Dendritic cell treated with granulocyte-macrophage colony-stimulating factor and Interleukin-4, amounts not matched to agents 40 ng/mL and 50 ng/mL, for 4 days (primary cell): ENCODE measurements at regions of chr13 and their contacts with region 1.

Region 1: DNA sequence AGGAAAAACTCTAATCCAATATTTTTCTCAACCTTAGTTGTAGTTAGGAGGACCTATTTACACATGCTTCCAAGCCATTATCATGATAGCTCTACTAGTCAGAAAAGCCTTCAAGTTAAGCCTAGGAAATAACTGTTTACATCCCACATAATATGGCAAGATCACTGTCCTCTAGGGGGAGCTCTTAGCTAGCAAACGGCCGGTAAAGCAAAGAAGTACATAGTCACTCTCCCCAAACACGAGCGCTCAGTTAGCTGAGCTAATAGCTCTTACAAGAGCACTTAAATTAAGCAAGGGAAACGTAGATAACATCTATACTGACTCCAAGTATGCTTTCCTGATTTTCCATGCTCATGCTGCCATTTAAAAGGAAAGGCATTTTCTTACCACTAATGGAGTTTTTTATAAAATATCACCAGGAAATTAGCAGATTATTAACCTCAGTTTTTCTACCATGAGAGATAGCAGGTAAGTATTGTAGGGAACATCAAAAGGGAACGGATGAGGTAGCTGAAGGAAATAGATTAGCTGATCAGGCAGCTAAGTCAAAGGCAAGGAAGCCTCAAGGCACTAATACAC is 100.6 kb upstream of the PABPC3 start:
- H3K4me3 Mint-ChIP-seq: no peak overlapping the region
- H3K27ac Mint-ChIP-seq: no peak overlapping the region
- H3K4me1 Mint-ChIP-seq: no peaks in the 10 kb centered on the region
- H3K27me3 Mint-ChIP-seq: peaks cover 39% of the 10 kb centered on the region

Region 2: DNA sequence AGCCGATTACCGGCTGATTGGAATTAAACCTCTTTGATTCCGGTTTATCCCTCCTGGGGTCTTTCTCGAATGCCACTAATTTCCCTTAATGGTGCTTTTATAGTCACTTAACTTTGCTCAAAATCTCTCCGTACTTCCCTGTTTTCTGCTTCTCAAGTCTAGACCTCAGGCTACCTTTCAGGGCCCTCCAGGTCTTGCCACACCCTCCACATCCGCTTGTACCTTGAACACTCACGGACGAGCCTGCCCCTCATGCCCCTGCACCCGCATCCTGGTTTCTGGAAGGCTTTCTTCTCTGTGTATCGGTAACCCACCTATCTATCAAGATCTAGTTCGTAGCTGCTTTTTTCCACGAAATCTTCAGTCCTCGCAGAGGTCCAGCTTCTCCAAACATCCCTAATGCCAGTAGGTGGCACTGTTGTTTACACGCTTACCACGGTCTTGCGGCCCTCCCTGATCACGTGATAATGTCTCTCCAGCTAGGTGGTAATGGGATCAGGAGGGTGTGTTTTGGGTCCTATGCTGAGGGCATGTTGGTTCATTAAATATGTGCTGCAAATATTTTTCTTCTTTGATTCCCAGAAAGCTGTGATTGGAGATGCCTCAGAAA is 301.3 kb before region 1 on chr13:
- intact Hi-C with region 1: loop called (anchors 10 kb)
- H3K4me3 Mint-ChIP-seq: no peak overlapping the region
- H3K27ac Mint-ChIP-seq: no peak overlapping the region
- H3K4me1 Mint-ChIP-seq: peaks cover 5% of the 10 kb centered on the region
- H3K27me3 Mint-ChIP-seq: peaks cover 17% of the 10 kb centered on the region

Region 3: DNA sequence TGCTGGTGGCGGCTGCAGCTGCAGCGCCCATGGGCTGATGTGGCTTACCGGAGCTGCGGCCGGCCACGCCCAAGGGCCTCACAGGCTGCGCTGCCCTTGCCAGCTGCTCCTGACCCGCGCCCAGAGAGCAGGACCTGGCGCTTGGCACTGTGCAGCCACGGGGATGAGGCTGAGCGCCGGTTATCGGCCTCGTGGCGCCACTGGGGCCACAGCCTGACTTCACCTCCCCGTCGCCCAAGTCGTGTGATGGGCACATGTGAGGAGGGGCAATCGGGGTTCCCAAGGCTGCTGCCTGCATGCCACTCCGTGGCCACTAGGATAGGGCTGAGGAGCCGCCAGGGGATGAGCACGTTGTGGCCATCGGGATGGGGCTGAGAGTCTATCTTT is 23.4 kb after region 1 on chr13:
- intact Hi-C with region 1: no loop called
- H3K4me3 Mint-ChIP-seq: no peak overlapping the region
- H3K27ac Mint-ChIP-seq: no peak overlapping the region
- H3K4me1 Mint-ChIP-seq: peaks cover 7% of the 10 kb centered on the region
- H3K27me3 Mint-ChIP-seq: peaks cover 68% of the 10 kb centered on the region

Region 4: GRCh38 chr13:25037057-25037813 is 41.9 kb after region 1 on chr13:
- intact Hi-C with region 1: loop called (anchors 1 kb)
- H3K4me3 Mint-ChIP-seq: no peak overlapping the region
- H3K27ac Mint-ChIP-seq: no peak overlapping the region
- H3K4me1 Mint-ChIP-seq: no peaks in the 10 kb centered on the region
- H3K27me3 Mint-ChIP-seq: peaks cover 37% of the 10 kb centered on the region

Region 5: GRCh38 chr13:25114220-25114619 is 118.9 kb after region 1 on chr13:
- intact Hi-C with region 1: loop called (anchors 5 kb)
- H3K4me3 Mint-ChIP-seq: no peak overlapping the region
- H3K27ac Mint-ChIP-seq: no peak overlapping the region
- H3K4me1 Mint-ChIP-seq: no peaks in the 10 kb centered on the region
- H3K27me3 Mint-ChIP-seq: peaks cover 7% of the 10 kb centered on the region